Colonic mucosa (tissue), 4 donors: ENCODE measurements at regions of chr7 and their contacts with region 1.

Region 1: DNA sequence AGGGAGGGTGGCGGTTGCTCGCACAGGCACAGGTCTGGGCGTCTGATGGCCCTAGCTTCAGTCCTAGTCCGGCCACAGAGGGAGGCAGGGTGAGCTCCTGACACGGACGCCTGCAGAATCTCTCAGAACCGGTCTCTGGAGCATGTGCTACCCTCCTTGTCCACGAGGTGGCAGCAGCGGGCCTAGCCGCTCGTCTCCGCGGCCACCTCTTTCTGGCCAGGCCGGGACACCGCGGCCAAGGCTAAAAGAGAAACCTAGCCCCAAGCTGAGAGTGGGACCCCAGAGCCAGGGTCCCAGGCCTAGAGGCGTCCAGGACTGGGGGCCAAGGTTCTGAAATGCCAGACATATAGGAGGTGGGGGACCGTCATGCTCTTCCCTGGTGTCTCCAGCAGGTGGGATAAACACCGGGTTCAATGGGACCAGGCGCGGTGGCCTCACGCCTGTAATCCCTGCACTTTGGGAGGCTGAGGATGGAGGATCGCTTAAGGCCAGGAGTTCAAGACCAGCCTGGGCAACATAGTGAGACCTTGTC is 3.2 kb upstream of the LAT2 start:
- DNase-seq: peak; percentile 92
- H3K4me3 ChIP-seq: peak overlapping the region; percentile 1
- H3K27ac ChIP-seq: no peak overlapping the region
- H3K4me1 ChIP-seq: no peaks in the 10 kb centered on the region
- H3K27me3 ChIP-seq: no peaks in the 10 kb centered on the region
- CTCF ChIP-seq: peak; percentile 96

Region 2: DNA sequence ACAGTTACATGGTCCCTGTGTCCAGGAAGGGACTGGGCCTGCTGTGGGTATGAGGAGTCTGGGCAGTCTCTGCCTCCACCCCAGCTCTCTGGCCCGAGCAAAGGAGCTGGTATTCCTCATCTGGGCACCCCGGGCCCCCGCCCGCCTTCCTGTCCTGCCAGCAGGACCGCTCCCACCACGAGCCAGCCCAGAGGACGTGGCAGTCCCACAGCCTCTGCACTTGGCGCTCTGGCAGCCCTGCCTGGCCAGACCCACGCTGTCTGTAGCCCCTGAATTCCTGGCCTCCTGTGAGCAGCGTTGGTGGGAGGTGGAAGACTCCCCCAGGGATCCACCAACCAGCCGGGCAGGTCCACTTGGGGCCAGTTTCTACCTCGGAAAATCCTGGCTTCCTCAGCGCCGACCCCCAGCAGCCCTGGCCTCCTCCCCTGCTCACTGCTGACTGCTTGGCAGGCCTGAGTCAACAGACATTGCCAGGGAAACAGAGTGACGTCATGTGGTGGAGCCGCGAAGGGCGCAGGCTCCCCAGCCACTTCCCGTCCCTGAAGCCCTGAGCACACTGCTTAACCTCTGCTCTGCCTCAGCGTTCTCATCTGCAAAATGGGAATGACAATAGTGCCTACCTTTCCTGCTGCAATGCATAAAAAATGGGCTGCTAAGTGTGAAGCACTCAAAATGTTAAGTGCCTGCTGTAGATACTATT is 144.7 kb before region 1 on chr7:
- intact Hi-C with region 1: loop called (anchors 1 kb)
- DNase-seq: peak; percentile 90
- H3K4me3 ChIP-seq: peak overlapping the region; percentile 8
- H3K27ac ChIP-seq: peak overlapping the region; percentile 74
- H3K4me1 ChIP-seq: peaks cover 14% of the 10 kb centered on the region
- H3K27me3 ChIP-seq: no peaks in the 10 kb centered on the region
- CTCF ChIP-seq: no peak

Region 3: DNA sequence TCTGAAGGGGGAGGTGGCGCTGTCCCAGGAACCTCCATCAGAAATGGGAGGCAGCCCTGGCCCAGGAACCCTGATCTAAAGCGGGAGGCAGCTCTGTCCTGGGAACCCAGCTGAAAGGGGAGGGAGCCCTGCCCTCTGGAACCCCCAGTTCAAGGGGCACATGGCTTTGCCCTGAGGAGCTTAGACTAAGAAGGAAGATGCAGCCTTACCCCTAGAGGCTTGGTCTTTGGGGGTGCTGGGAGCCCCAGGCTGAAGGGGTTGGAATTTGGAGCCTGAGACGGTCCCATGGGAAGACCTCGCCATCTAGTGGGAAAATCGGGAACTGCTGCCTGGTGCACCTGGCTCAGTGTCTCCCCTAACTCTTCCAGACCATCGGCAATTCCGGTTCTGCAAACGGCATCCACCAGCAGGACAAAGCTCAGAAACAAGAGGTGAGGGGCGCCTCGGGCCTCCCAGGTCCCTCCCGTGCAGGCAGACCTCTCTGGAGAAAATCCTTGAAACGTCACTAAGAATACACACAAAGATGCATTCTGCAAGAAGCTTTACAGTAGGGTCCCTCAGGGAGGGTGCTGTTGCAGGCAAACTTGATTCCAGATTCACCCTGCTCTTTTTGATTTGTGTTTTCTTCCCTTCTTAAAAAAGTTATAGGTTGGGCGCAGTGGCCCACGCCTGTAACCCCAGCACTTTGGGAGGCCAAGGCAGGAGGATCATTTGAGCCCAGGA is 194.6 kb after region 1 on chr7:
- intact Hi-C with region 1: loop called (anchors 2 kb)
- DNase-seq: peak; percentile 84
- H3K4me3 ChIP-seq: no peak overlapping the region
- H3K27ac ChIP-seq: no peak overlapping the region
- H3K4me1 ChIP-seq: no peaks in the 10 kb centered on the region
- H3K27me3 ChIP-seq: no peaks in the 10 kb centered on the region
- CTCF ChIP-seq: peak; percentile 96